ENCODE measurements at regions of chr1 and their contacts with region 1.

Region 1: DNA sequence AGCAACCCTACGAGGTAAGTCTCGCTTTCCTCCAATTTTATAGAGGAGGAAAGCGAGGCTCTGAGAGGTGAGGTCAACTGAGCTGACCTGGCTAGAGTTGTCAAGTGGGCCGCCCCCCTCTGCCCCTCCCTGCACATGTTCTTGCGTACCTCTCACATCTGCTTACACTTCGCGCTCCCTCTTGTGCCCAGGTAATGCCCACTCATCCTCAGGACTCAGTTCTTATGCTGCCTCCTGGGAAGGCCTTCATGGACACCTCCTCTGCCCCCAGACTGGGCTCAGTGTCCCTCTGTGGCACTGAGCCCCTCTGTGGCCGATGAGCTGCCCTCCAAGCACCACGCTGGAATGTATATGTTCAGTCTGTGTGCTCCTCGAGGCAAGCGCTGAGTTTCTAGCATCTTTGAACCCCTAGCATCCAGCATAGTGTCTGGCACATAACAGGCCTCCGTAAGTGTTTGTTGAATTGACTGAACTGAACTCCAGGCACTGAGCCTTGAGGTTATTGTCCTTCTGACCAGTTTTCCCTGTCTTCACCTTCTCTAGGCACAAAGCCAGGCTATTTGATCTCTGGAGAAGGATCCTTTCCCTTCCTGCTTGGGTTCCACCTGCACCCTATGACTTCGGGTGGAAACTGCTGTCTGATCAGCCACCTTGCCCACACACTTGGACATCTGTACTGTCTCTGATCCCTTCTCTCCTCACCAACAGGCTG is 13.5 kb downstream of the MOV10 start:
- DNase-seq: no peak
- ATAC-seq: no peak
- H3K4me3 ChIP-seq: no peak overlapping the region
- H3K27ac ChIP-seq: no peak overlapping the region
- H3K4me1 ChIP-seq: no peaks in the 10 kb centered on the region
- H3K27me3 ChIP-seq: no peaks in the 10 kb centered on the region
- CTCF ChIP-seq: no peak

Region 2: GRCh38 chr1:112666946-112667345 is 21.0 kb before region 1 on chr1:
- CTCF ChIA-PET with region 1: no interaction called
- POLR2A ChIA-PET with region 1: interaction called, 18 read pairs
- intact Hi-C with region 1: no loop called
- DNase-seq: no peak
- ATAC-seq: no peak
- H3K4me3 ChIP-seq: no peak overlapping the region
- H3K27ac ChIP-seq: no peak overlapping the region
- H3K4me1 ChIP-seq: no peaks in the 10 kb centered on the region
- H3K27me3 ChIP-seq: no peaks in the 10 kb centered on the region
- CTCF ChIP-seq: no peak

Region 3: GRCh38 chr1:112849425-112850033 is 161.6 kb after region 1 on chr1:
- CTCF ChIA-PET with region 1: no interaction called
- POLR2A ChIA-PET with region 1: no interaction called
- intact Hi-C with region 1: no loop called
- DNase-seq: peak; percentile 51
- ATAC-seq: peak; percentile 69
- H3K4me3 ChIP-seq: peak overlapping the region; percentile 85
- H3K27ac ChIP-seq: peak overlapping the region; percentile 27
- H3K4me1 ChIP-seq: peaks cover 21% of the 10 kb centered on the region
- H3K27me3 ChIP-seq: no peaks in the 10 kb centered on the region
- CTCF ChIP-seq: no peak